Vagina (tissue), 2 donors: ENCODE measurements at regions of chr7 and their contacts with region 1.

Region 1: DNA sequence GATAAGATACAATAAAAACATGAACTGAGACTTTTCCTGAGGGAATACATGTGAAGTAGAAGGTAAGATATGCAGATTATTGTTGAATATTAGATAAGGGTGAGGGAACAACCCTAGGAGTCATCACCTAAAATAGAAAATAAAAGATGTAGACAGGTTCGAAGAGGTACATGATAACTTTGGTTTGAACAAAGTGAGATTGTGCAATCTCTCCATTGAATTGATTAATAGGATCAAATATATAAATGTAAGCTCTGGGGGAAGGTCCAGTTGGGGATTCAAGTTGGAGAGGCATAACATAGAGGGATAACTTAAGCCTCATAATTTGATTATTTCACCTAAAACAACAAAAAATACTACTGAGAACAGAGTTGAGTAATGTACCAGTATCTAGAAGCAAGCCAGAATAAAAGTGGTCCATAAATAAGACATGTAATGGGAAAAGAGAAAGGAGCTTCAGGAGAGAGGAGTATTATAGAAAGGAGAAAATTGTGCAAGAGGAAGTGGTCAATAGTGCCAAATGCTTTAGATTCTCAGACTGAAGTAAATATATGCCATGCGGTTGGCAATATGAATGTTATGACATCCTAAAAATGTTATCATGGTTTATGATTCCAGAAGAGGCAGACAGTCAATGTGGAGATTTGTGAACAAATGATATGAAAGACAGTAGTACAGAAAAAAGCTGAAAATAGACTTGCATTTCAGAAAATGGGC is 282.3 kb upstream of the CHRM2 start:
- DNase-seq: no peak
- H3K4me3 ChIP-seq: no peak overlapping the region
- H3K27ac ChIP-seq: no peak overlapping the region
- H3K4me1 ChIP-seq: no peaks in the 10 kb centered on the region
- H3K27me3 ChIP-seq: no peaks in the 10 kb centered on the region
- CTCF ChIP-seq: no peak
- POLR2A ChIP-seq: no peak

Region 2: GRCh38 chr7:137231950-137232349 is 645.8 kb after region 1 on chr7:
- intact Hi-C with region 1: loop called (anchors 5 kb)
- DNase-seq: no peak
- H3K4me3 ChIP-seq: no peak overlapping the region
- H3K27ac ChIP-seq: no peak overlapping the region
- H3K4me1 ChIP-seq: no peaks in the 10 kb centered on the region
- H3K27me3 ChIP-seq: no peaks in the 10 kb centered on the region
- CTCF ChIP-seq: no peak
- POLR2A ChIP-seq: no peak